ENCODE measurements at regions of chr13 and their contacts with region 1.

Region 1: DNA sequence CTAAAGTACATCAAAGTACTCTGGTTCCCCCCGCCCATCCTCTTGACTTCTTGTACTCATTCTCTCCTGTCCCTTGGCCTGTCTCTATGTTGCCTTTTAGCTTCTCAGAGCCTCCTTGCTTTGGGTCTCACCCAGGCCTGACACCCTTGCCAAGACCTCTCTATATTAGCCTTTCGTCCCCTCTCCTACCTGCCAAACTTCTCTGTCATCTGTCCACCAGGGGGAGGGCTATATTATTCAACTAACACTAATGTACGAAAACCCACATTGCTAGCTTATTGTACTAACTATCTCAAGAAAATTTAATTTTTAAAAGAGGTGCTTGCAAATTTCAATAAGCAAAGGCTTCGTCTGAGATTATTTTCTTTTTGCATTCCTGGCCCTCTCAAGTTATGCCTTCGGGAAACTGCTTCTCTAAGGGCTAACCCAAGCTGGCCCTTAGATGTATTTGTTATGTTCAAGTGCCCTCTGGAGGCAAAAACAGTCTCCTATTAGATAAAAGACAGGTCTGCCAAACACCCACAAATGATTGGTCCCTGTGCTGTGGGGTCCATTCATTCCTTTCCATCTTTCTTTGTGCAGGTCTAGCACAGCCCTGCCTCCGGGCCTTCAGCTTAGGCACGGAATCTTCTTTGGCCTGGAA is 6.3 kb upstream of the MRPS31 start:
- DNase-seq: peak in 2 of 9 donors; percentile 15 to 44
- ATAC-seq: peak; percentile 78
- H3K4me3 ChIP-seq: peak overlapping the region; percentile 37
- H3K4me3 Mint-ChIP-seq: peak overlapping the region; percentile 68 to 92 (median 82)
- H3K27ac ChIP-seq: peak overlapping the region; percentile 61
- H3K27ac Mint-ChIP-seq: peak overlapping the region; percentile 94 to 99 (median 97)
- H3K4me1 ChIP-seq: peaks cover 21 to 24% of the 10 kb centered on the region in 2 donors
- H3K4me1 Mint-ChIP-seq: peaks cover 19 to 36% (median 32%) of the 10 kb centered on the region in 7 donors
- H3K27me3 ChIP-seq: no peaks in the 10 kb centered on the region
- H3K27me3 Mint-ChIP-seq: no peaks in the 10 kb centered on the region

Region 2: DNA sequence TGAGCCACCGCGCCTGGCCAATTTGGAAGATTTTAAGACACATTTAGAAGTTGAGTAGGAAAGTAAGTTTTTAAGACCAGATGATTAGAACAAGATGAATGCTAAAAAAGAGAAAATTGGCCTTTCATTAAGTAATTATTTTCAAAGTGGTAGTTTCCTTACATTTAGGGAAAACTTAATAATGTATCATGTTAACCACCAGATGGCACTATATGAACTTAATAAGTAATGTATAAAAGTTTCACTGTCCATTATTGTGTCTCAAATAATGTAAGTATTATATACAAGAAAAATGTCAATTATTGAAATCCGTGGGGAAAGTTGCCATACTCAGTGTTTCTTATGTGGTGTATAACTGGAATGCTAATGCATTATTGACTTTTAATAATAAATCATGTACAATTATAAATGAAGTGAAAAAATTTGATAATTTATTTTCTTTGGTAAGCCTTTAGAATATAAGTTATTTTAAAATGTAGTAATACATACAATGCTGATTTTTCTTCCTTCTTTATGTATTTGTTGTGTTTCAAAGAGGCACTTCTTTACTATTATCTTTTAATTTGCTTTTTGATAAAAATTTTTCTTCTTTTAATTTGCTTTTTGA is 1092.7 kb before region 1 on chr13:
- CTCF ChIA-PET with region 1: interaction called, 12 read pairs
- POLR2A ChIA-PET with region 1: no interaction called
- intact Hi-C with region 1: loop called (anchors 1 kb)
- DNase-seq: peak in 6 of 9 donors; percentile 6 to 44 (median 34)
- ATAC-seq: peak; percentile 53
- H3K4me3 ChIP-seq: no peak overlapping the region
- H3K4me3 Mint-ChIP-seq: no peak overlapping the region
- H3K27ac ChIP-seq: no peak overlapping the region
- H3K27ac Mint-ChIP-seq: no peak overlapping the region
- H3K4me1 ChIP-seq: no peaks in the 10 kb centered on the region
- H3K4me1 Mint-ChIP-seq: peaks cover 0 to 20% (median 3%) of the 10 kb centered on the region in 7 donors
- H3K27me3 ChIP-seq: no peaks in the 10 kb centered on the region
- H3K27me3 Mint-ChIP-seq: no peaks in the 10 kb centered on the region

Region 3: GRCh38 chr13:39777527-39778061 is 999.7 kb before region 1 on chr13:
- CTCF ChIA-PET with region 1: interaction called, 3 read pairs
- POLR2A ChIA-PET with region 1: no interaction called
- intact Hi-C with region 1: loop called (anchors 2 to 5 kb)
- DNase-seq: peak in 7 of 9 donors; percentile 7 to 58 (median 48)
- ATAC-seq: peak; percentile 62
- H3K4me3 ChIP-seq: no peak overlapping the region
- H3K4me3 Mint-ChIP-seq: peak overlapping the region in 2 of 10 donors; percentile 6 to 18
- H3K27ac ChIP-seq: no peak overlapping the region
- H3K27ac Mint-ChIP-seq: peak overlapping the region in 8 of 9 donors; percentile 8 to 60 (median 18)
- H3K4me1 ChIP-seq: peaks cover 0 to 22% of the 10 kb centered on the region in 2 donors
- H3K4me1 Mint-ChIP-seq: peaks cover 12 to 40% (median 36%) of the 10 kb centered on the region in 7 donors
- H3K27me3 ChIP-seq: no peaks in the 10 kb centered on the region
- H3K27me3 Mint-ChIP-seq: no peaks in the 10 kb centered on the region

Region 4: GRCh38 chr13:39942552-39943273 is 834.6 kb before region 1 on chr13:
- CTCF ChIA-PET with region 1: interaction called, 4 read pairs
- POLR2A ChIA-PET with region 1: no interaction called
- intact Hi-C with region 1: loop called in 1 of 2 experiments (anchors 5 kb)
- DNase-seq: peak; percentile 41 to 71 (median 63)
- ATAC-seq: peak; percentile 98
- H3K4me3 ChIP-seq: no peak overlapping the region
- H3K4me3 Mint-ChIP-seq: peak overlapping the region in 2 of 10 donors; percentile 2 to 71
- H3K27ac ChIP-seq: no peak overlapping the region
- H3K27ac Mint-ChIP-seq: peak overlapping the region in 3 of 9 donors; percentile 1 to 63 (median 8)
- H3K4me1 ChIP-seq: no peaks in the 10 kb centered on the region
- H3K4me1 Mint-ChIP-seq: peaks cover 4 to 16% (median 11%) of the 10 kb centered on the region in 7 donors
- H3K27me3 ChIP-seq: no peaks in the 10 kb centered on the region
- H3K27me3 Mint-ChIP-seq: peaks cover 0 to 3% (median 0%) of the 10 kb centered on the region in 5 donors

Region 5: DNA sequence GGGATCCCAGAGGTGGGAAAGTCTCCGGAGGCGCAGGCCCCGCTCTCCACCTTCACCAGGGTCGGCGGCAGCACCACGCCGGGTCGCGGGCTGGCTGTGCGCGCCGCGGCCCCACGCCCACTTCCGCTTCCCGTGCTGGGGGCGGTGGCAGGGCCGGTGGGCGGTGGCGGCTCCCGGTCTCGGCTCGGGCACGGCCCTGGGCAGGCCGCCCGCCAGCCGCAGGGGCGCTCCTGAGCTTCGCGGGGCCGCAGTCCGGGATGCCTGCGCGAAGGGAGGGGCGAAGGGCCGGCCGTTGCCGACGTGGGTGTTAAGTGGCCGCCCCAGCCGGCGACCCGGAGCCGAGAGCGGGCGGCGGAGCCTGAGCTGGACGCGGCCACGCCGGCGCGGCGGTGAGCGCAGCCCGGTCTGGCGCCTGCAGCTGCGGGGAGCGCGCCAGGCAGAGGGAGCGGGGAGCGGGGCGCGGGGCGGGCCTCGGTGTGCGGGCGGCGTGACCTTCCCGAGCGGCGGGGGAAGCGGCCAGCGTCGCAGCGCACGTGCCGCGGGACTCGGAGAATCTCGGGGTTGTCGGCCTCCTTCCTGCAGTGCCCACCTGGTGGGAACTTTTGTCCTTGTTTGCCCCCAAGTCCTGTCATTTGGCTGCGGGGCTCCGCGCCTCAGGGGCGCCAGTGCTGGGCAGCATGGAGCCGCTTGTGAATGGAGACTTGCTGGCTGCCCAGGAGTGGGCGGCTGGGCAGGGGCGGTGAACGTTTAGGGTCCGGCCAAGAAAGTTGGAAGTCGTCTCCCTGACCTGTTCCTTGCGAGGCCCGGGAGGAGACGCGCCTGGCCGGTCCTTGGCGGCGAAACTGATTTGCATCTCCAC is 12.2 kb after region 1 on chr13 and contains the start of gene SLC25A15:
- CTCF ChIA-PET with region 1: interaction called, 7 read pairs
- POLR2A ChIA-PET with region 1: interaction called, 8 read pairs
- intact Hi-C with region 1: loop called (anchors 1 kb)
- DNase-seq: peak; percentile 57 to 84 (median 72)
- ATAC-seq: peak; percentile 93
- H3K4me3 ChIP-seq: peak within 1 kb of the TSS; percentile 62
- H3K4me3 Mint-ChIP-seq: peak within 1 kb of the TSS; percentile 73 to 91 (median 82)
- H3K27ac ChIP-seq: peak within 1 kb of the TSS; percentile 75
- H3K27ac Mint-ChIP-seq: peak within 1 kb of the TSS; percentile 71 to 95 (median 82)
- H3K4me1 ChIP-seq: peaks cover 3 to 4% of the 10 kb centered on the region in 2 donors
- H3K4me1 Mint-ChIP-seq: peaks cover 11 to 42% (median 34%) of the 10 kb centered on the region in 7 donors
- H3K27me3 ChIP-seq: no peaks in the 10 kb centered on the region
- H3K27me3 Mint-ChIP-seq: no peaks in the 10 kb centered on the region
- total RNA-seq, gene SLC25A15: 4.3 to 11.8 (median 9.4) TPM

Region 6: GRCh38 chr13:40813661-40814454 is 36.6 kb after region 1 on chr13:
- CTCF ChIA-PET with region 1: interaction called, 5 read pairs
- POLR2A ChIA-PET with region 1: no interaction called
- intact Hi-C with region 1: loop called (anchors 1 kb)
- DNase-seq: peak in 1 of 9 donors; percentile 29
- ATAC-seq: peak; percentile 67
- H3K4me3 ChIP-seq: no peak overlapping the region
- H3K4me3 Mint-ChIP-seq: no peak overlapping the region
- H3K27ac ChIP-seq: no peak overlapping the region
- H3K27ac Mint-ChIP-seq: no peak overlapping the region
- H3K4me1 ChIP-seq: no peaks in the 10 kb centered on the region
- H3K4me1 Mint-ChIP-seq: peaks cover 0 to 3% (median 0%) of the 10 kb centered on the region in 7 donors
- H3K27me3 ChIP-seq: no peaks in the 10 kb centered on the region
- H3K27me3 Mint-ChIP-seq: no peaks in the 10 kb centered on the region

Region 7: DNA sequence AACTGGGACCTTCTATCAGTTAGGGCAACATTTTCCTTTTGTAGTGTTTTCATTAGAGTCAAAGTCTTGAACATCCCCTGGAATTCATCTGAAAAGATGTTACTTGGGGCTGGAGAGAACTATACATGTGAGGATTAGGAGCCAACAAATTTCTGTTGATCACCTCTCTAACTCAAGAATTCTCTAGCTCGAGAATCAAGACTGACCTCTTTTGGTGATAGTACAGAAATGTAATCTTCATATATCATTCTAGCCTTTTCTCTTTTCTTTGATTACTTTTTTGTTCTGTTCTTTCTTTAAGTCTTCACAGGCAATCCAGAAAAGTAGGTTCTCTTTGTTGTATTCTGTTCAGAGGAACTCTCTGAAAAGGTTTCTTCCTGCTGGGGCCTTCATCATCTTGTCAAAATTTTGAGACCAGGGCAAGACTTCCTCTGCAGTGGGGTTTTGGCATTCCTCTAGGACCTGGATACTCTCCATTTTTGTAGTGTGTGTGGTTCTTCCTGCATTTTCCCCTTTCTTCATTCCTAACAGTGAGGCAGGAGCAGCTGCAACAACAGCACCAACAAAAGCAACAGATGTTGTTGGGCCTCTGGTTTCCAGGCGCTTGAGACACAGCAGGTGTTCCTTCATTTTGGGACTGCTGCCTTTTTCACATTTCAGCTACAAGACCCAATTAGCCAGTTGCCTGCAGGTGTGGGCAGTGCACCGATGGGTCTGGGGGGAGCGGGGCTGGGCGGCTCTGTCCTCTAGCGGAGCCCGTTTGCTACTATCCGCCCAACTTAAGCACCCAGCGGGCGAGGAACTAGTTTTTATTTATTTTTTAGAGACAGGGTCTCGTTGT is 215.6 kb after region 1 on chr13:
- CTCF ChIA-PET with region 1: interaction called, 3 read pairs
- POLR2A ChIA-PET with region 1: interaction called, 4 read pairs
- intact Hi-C with region 1: loop called in 1 of 2 experiments (anchors 1 kb)
- DNase-seq: peak in 1 of 9 donors; percentile 52
- ATAC-seq: peak; percentile 50
- H3K4me3 ChIP-seq: no peak overlapping the region
- H3K4me3 Mint-ChIP-seq: peak overlapping the region; percentile 12 to 57 (median 46)
- H3K27ac ChIP-seq: peak overlapping the region; percentile 57
- H3K27ac Mint-ChIP-seq: peak overlapping the region; percentile 54 to 94 (median 87)
- H3K4me1 ChIP-seq: peaks cover 48 to 64% of the 10 kb centered on the region in 2 donors
- H3K4me1 Mint-ChIP-seq: peaks cover 58 to 98% (median 91%) of the 10 kb centered on the region in 7 donors
- H3K27me3 ChIP-seq: no peaks in the 10 kb centered on the region
- H3K27me3 Mint-ChIP-seq: no peaks in the 10 kb centered on the region

Measured in naive thymus-derived CD4-positive, alpha-beta T cell (primary cell).